ENCODE measurements at regions of chr6 and their contacts with region 1.

Region 1: GRCh38 chr6:89352278-89353117 is at the start of gene UBE2J1:
- DNase-seq: peak; percentile 96
- H3K4me3 ChIP-seq: peak within 1 kb of the TSS; percentile 68 to 88 (median 86)
- H3K27ac ChIP-seq: peak within 1 kb of the TSS; percentile 96 to 99 (median 99)
- H3K4me1 ChIP-seq: peaks cover 4 to 50% (median 29%) of the 10 kb centered on the region in 4 donors
- H3K27me3 ChIP-seq: no peaks in the 10 kb centered on the region
- CTCF ChIP-seq: no peak
- EP300 ChIP-seq: peak; percentile 38
- POLR2A ChIP-seq: peak; percentile 96
- total RNA-seq, gene UBE2J1: 27.3 to 52.9 (median 38.2) TPM

Region 2: GRCh38 chr6:88963139-88964090 is 389.1 kb before region 1 on chr6 and contains the start of gene RNGTT:
- in situ Hi-C with region 1: no loop called
- intact Hi-C with region 1: loop called (anchors 10 kb)
- DNase-seq: peak; percentile 100
- H3K4me3 ChIP-seq: peak within 1 kb of the TSS; percentile 57 to 93 (median 82)
- H3K27ac ChIP-seq: peak within 1 kb of the TSS; percentile 83 to 92 (median 89)
- H3K4me1 ChIP-seq: peaks cover 7 to 19% (median 16%) of the 10 kb centered on the region in 4 donors
- H3K27me3 ChIP-seq: no peaks in the 10 kb centered on the region
- CTCF ChIP-seq: no peak
- EP300 ChIP-seq: no peak
- POLR2A ChIP-seq: peak; percentile 41
- total RNA-seq, gene RNGTT: 5.4 to 20.9 (median 15.2) TPM

Region 3: GRCh38 chr6:89080542-89081422 is 271.7 kb before region 1 on chr6 and contains the start of gene PNRC1:
- in situ Hi-C with region 1: loop called in 1 of 4 experiments (anchors 10 kb)
- intact Hi-C with region 1: no loop called
- DNase-seq: peak; percentile 100
- H3K4me3 ChIP-seq: peak within 1 kb of the TSS; percentile 85 to 99 (median 96)
- H3K27ac ChIP-seq: peak within 1 kb of the TSS; percentile 100
- H3K4me1 ChIP-seq: peaks cover 6 to 38% (median 18%) of the 10 kb centered on the region in 4 donors
- H3K27me3 ChIP-seq: no peaks in the 10 kb centered on the region
- CTCF ChIP-seq: peak in 1 of 5 experiments; percentile 8
- EP300 ChIP-seq: no peak
- POLR2A ChIP-seq: peak; percentile 100
- total RNA-seq, gene PNRC1: 99.1 to 281 (median 157) TPM